PC-9 (cell line): ENCODE measurements at regions of chr2 and their contacts with region 1.

Region 1: GRCh38 chr2:72862239-72862988 is 24.8 kb upstream of the SPR start:
- DNase-seq: peak; percentile 78 to 90
- H3K4me3 ChIP-seq: peak overlapping the region; percentile 46; the same call in 1 of the 2 replicates
- H3K27ac ChIP-seq: no peak overlapping the region
- H3K4me1 ChIP-seq: no peaks in the 10 kb centered on the region; the same call in 1 of the 2 replicates
- H3K27me3 ChIP-seq: no peaks in the 10 kb centered on the region
- CTCF ChIP-seq: peak; percentile 97

Region 2: DNA sequence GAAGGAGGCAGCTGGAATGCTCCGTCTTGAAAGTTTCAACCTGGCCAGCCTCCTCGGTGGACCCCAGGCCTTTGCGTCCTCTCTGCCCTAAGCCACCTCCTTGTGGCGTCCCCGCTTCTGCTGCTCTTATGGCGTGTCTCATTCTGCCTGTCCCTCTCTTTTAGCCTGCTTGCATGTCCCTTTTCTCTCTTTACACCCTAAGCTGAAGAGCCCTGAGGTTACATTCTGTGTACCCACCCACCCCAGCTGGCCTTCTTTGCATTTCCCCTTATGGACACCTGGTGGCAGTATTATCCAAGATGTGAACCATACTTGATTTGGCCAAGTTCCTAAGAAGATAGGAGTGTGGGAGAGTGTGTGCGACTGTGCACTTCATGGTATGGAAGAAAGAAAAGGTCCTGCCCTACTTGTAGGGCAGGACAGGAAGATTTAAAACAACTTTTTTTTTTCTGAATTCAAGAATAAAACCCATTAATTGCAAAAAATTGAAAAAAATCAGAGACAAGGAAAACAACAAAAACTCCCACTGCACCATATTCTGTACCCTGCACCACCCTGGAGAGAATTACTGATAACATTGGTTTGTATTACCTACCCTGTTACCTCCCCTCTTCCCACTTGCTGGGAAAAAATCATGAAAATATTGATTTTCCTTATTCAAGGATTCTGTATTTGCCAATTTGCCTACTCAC is 1331.6 kb before region 1 on chr2:
- CTCF ChIA-PET with region 1: no interaction called
- POLR2A ChIA-PET with region 1: no interaction called
- intact Hi-C with region 1: loop called (anchors 5 kb)
- DNase-seq: peak in 1 of 2 experiments; percentile 22
- H3K4me3 ChIP-seq: no peak overlapping the region
- H3K27ac ChIP-seq: peak overlapping the region; percentile 29; the same call in 1 of the 2 replicates
- H3K4me1 ChIP-seq: peaks cover 10% of the 10 kb centered on the region; the same call in 1 of the 2 replicates
- H3K27me3 ChIP-seq: no peaks in the 10 kb centered on the region
- CTCF ChIP-seq: peak; percentile 84

Region 3: GRCh38 chr2:72572501-72572900 is 289.9 kb before region 1 on chr2:
- CTCF ChIA-PET with region 1: no interaction called
- POLR2A ChIA-PET with region 1: no interaction called
- intact Hi-C with region 1: no loop called
- DNase-seq: no peak
- H3K4me3 ChIP-seq: no peak overlapping the region
- H3K27ac ChIP-seq: no peak overlapping the region
- H3K4me1 ChIP-seq: peaks cover 20% of the 10 kb centered on the region
- H3K27me3 ChIP-seq: no peaks in the 10 kb centered on the region
- CTCF ChIP-seq: no peak

Region 4: DNA sequence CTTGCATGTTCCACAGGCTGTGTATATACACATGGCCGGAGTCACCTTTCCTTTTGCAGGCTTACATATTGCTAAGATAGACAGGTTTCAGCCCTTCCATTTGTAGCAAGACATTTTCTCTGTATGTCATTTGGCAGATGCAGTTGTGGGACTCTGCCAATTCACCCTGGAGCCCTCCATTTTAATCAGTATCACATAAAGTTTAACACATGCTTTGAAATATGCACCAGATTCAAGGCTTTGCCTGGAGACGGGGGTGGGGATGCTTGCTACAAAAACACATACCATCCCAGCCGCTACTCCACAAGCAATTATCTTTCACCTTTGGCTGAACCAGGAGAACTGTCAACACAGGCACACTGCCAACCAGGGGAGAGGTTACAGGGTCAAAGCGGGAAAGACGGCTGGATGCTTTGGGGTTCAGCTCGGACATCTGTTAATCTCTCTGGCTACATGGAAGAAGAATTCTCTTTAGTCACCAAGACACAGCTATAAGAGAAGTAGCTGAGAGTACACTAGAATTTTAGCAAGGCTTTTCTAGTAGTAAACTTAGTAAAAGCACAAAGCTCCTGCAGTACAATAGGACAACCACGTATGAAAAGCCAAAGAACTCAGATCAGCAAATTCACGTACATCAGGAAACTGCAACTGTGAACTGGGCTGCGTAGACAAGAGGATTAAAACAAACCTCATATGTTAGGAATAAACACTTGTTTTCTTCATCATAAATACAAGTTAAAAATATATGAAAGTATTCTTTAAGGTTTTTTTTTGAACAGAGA is 167.5 kb before region 1 on chr2:
- CTCF ChIA-PET with region 1: no interaction called
- POLR2A ChIA-PET with region 1: no interaction called
- intact Hi-C with region 1: no loop called
- DNase-seq: peak in 1 of 2 experiments; percentile 29
- H3K4me3 ChIP-seq: no peak overlapping the region
- H3K27ac ChIP-seq: no peak overlapping the region
- H3K4me1 ChIP-seq: peaks cover 16% of the 10 kb centered on the region
- H3K27me3 ChIP-seq: no peaks in the 10 kb centered on the region
- CTCF ChIP-seq: no peak

Region 5: GRCh38 chr2:72770879-72771461 is 91.4 kb before region 1 on chr2:
- CTCF ChIA-PET with region 1: no interaction called
- POLR2A ChIA-PET with region 1: no interaction called
- intact Hi-C with region 1: loop called (anchors 1 kb)
- DNase-seq: peak; percentile 48 to 71
- H3K4me3 ChIP-seq: no peak overlapping the region
- H3K27ac ChIP-seq: no peak overlapping the region
- H3K4me1 ChIP-seq: peaks cover 5% of the 10 kb centered on the region; the same call in 1 of the 2 replicates
- H3K27me3 ChIP-seq: no peaks in the 10 kb centered on the region
- CTCF ChIP-seq: peak; percentile 95